A673 (cell line): ENCODE measurements at regions of chr11 and their contacts with region 1.

Region 1: GRCh38 chr11:47176328-47177228 is at the start of gene ARFGAP2:
- DNase-seq: peak; percentile 100
- H3K4me3 ChIP-seq: peak within 1 kb of the TSS; percentile 72
- H3K27ac ChIP-seq: peak within 1 kb of the TSS; percentile 93
- H3K4me1 ChIP-seq: peaks cover 16% of the 10 kb centered on the region
- H3K27me3 ChIP-seq: no peaks in the 10 kb centered on the region
- CTCF ChIP-seq: no peak
- total RNA-seq, gene ARFGAP2: 179 and 206 TPM in 2 replicates

Region 2: DNA sequence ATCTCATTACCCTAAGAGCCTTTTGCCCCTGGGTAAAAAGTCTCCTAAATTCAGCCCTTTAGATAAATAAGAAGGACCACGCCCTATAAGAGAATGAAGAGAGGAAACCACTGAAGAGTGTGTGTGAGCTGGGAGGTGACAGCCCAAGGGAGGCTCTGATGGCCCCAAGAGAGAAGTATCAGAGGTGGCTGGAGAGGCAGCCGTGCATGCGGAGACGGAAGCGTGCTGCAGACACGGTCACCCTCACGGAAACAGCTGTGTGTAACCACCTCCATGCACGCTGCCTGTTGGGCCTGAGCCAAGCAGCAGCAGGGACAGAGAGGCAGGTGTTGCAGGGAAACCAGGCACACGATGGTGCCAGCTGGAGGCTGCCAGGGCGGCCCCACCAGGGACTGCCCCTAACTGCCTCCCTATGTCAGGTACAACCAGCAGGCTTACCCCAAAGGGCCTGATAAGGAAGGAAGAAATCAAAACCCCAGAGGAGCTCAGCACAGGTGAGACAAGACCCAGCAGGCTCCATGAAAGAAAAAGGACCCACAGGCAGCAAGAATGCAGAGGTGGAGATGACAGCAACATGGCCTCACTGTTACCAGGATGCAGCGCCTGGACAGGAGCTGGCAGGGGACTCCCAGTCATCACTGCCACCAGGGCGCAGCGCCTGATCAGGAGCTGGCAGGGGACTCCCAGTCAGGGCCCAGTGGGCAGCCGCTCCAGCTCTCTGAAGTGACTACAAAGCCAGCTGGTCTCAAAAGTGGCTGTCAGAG is 1246.4 kb before region 1 on chr11:
- CTCF ChIA-PET with region 1: no interaction called
- POLR2A ChIA-PET with region 1: no interaction called
- intact Hi-C with region 1: no loop called
- DNase-seq: no peak
- H3K4me3 ChIP-seq: no peak overlapping the region
- H3K27ac ChIP-seq: no peak overlapping the region
- H3K4me1 ChIP-seq: no peaks in the 10 kb centered on the region
- H3K27me3 ChIP-seq: no peaks in the 10 kb centered on the region
- CTCF ChIP-seq: 0 out of 2 replicates have a peak, but pooled peaks have one; percentile 10

Region 3: GRCh38 chr11:46889689-46890475 is 286.7 kb before region 1 on chr11:
- CTCF ChIA-PET with region 1: no interaction called
- POLR2A ChIA-PET with region 1: no interaction called
- intact Hi-C with region 1: loop called (anchors 1 kb)
- DNase-seq: peak; percentile 92
- H3K4me3 ChIP-seq: no peak overlapping the region
- H3K27ac ChIP-seq: no peak overlapping the region
- H3K4me1 ChIP-seq: no peaks in the 10 kb centered on the region
- H3K27me3 ChIP-seq: no peaks in the 10 kb centered on the region
- CTCF ChIP-seq: peak; percentile 100

Region 4: GRCh38 chr11:47248664-47249377 is 72.2 kb after region 1 on chr11 and contains the start of gene ACP2:
- CTCF ChIA-PET with region 1: no interaction called
- POLR2A ChIA-PET with region 1: no interaction called
- intact Hi-C with region 1: loop called (anchors 5 kb)
- DNase-seq: peak; percentile 99
- H3K4me3 ChIP-seq: peak within 1 kb of the TSS; percentile 69
- H3K27ac ChIP-seq: peak within 1 kb of the TSS; percentile 96
- H3K4me1 ChIP-seq: peaks cover 13% of the 10 kb centered on the region
- H3K27me3 ChIP-seq: no peaks in the 10 kb centered on the region
- CTCF ChIP-seq: peak; percentile 68
- total RNA-seq, gene ACP2: 63.3 and 68.1 TPM in 2 replicates

Region 5: DNA sequence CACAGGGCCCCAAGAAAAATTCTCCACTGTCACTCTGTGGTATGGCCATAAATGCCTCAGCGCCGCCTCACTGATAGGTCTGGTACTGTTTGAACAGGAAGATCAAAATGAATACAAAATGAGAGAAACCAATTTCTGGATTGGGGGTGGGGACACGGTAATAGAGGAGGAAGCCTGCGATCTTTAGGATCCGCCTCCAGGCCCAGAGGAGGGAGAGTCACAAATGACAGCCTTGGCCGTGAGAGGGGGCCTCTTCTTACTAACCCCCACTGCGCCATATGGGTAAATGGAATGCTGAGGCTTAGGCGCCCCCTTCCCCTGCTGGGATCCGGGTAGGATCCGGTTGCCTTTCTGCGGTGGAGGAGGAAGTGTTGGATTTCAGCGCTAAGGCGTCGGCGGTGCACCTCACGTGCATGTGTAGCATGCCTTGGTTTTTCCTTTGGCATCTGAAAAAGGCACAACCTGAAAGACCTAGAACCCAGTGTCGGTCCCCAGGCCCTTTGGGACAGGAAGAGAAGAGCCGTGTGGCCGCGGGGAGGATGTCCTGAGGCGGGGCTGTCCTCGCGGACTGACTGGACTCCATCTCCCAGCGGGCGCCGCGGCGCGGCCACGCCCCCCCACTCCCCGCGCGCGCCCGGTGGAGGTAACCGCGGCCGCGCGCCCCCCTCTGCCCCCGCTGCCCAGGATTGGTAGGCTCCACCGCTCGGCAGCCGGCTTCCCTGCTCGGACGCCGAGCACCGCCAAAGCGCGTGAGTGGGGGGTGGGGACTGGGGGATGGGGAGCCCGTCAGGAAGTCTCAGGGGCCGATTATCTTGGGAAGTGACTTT is 92.6 kb after region 1 on chr11:
- CTCF ChIA-PET with region 1: interaction called, 3 read pairs
- POLR2A ChIA-PET with region 1: no interaction called
- intact Hi-C with region 1: loop called (anchors 2 kb)
- DNase-seq: peak; percentile 99
- H3K4me3 ChIP-seq: peak overlapping the region; percentile 65
- H3K27ac ChIP-seq: peak overlapping the region; percentile 95
- H3K4me1 ChIP-seq: peaks cover 42% of the 10 kb centered on the region
- H3K27me3 ChIP-seq: no peaks in the 10 kb centered on the region
- CTCF ChIP-seq: peak; percentile 54

Region 6: DNA sequence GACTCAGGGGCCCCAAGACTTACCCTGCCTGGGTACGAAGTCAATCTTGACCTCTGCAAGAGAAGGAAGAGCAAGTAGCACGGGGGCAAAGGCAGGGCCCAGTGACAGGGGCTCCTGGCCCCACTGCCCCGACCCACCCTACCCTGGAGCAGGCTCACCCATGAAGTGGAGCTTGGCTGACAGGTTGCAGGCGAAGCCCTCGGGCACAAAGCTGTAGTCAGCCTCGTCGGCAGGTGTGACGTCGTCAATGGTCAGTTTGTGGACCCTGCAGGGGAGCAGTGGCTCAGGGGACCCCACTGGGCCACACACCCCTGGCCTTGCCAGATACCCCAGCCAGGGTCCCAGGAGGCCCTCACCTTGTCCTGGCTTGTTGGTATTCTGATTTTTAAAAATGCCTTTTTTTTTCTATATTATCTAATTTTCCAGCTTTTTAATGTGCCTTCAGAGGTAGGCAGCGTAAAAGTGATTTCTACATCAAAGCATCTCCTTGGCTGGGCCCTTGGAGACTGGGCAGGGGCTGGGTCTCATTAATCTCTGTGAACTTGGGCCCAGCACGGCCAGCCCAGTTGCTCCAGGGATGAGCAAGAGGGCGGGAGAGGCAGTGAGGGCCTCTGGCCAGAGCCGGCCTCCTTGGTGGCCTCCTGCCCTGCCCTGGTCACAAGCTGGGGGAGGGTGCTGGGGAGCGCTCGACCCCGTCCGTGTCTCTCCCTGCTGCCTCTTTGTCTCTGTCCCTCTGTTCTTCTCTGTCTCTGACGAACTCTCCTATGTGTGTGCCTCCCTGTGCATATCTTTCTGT is 164.6 kb after region 1 on chr11:
- CTCF ChIA-PET with region 1: no interaction called
- POLR2A ChIA-PET with region 1: no interaction called
- intact Hi-C with region 1: no loop called
- DNase-seq: no peak
- H3K4me3 ChIP-seq: no peak overlapping the region
- H3K27ac ChIP-seq: no peak overlapping the region
- H3K4me1 ChIP-seq: no peaks in the 10 kb centered on the region
- H3K27me3 ChIP-seq: no peaks in the 10 kb centered on the region
- CTCF ChIP-seq: no peak

Region 7: DNA sequence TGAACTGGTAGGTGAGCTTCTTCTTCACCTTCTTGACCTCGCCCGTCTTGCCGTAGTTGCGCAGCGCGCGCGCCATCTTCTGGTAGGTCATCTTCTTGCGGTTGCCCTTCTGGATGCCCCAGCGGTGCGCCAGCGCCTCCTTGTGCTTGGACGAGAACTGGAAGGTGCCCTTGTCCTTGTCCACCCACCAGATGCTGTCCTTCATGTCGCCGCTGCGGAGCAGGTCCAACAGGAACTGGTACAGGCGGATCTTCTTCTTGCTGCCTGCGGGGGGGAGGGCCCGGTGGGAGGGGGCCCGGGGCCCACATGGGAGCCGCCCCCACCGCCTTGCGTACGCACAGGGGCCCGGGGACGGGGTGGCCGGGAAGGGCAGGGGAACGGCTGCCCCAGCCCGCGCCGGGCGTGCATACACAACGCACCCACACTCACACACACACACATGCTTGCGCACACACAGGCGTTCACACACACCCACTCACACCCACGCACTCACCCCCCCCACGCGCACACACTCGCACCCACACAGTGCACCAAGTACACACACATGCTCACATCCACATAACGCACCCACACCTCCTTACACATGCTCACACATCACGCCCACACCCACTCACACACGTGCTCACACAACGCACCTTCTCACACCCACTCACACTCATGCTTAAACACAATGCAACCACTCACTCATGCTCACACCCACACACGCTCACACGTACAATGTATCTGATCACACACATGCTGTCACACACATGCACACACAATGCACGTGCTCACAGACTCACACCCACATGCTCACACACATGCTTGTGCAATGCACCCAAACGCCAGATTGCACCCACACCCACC is 178.9 kb after region 1 on chr11:
- CTCF ChIA-PET with region 1: interaction called, 9 read pairs
- POLR2A ChIA-PET with region 1: no interaction called
- intact Hi-C with region 1: loop called (anchors 1 kb)
- DNase-seq: peak; percentile 99
- H3K4me3 ChIP-seq: peak overlapping the region; percentile 50
- H3K27ac ChIP-seq: peak overlapping the region; percentile 18
- H3K4me1 ChIP-seq: peaks cover 5% of the 10 kb centered on the region
- H3K27me3 ChIP-seq: no peaks in the 10 kb centered on the region
- CTCF ChIP-seq: peak; percentile 100

Region 8: DNA sequence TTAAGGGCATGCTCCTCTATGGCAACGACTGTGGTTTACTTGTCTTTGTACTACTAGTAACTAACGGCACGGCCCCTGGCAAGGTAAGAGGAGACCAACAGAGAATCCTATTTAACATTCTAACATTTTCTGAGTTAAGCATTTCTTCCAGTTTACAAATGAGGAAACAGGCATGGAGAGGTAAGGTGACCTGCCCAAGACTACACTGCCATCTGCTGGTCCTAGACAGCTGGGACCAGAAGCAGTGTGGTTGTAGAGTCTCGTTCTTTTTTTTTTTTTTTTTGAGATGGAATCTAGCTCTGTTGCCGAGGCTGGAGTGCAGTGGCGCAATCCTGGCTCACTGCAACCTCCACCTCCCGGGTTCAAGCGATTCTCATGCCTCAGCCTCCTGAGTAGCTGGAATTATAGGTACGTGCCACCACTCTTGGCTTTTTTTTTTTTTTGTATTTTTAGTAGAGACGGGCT is 277.6 kb after region 1 on chr11:
- CTCF ChIA-PET with region 1: no interaction called
- POLR2A ChIA-PET with region 1: interaction called, 4 read pairs
- intact Hi-C with region 1: loop called (anchors 5 kb)
- DNase-seq: peak; percentile 96
- H3K4me3 ChIP-seq: no peak overlapping the region
- H3K27ac ChIP-seq: no peak overlapping the region
- H3K4me1 ChIP-seq: no peaks in the 10 kb centered on the region
- H3K27me3 ChIP-seq: no peaks in the 10 kb centered on the region
- CTCF ChIP-seq: peak; percentile 99

Region 9: GRCh38 chr11:47847892-47848635 is 671.5 kb after region 1 on chr11 and contains the start of gene NUP160:
- CTCF ChIA-PET with region 1: no interaction called
- POLR2A ChIA-PET with region 1: no interaction called
- intact Hi-C with region 1: loop called (anchors 5 kb)
- DNase-seq: peak; percentile 93
- H3K4me3 ChIP-seq: peak within 1 kb of the TSS; percentile 62
- H3K27ac ChIP-seq: peak within 1 kb of the TSS; percentile 93
- H3K4me1 ChIP-seq: peaks cover 13% of the 10 kb centered on the region
- H3K27me3 ChIP-seq: no peaks in the 10 kb centered on the region
- CTCF ChIP-seq: 0 out of 2 replicates have a peak, but pooled peaks have one; percentile 27
- total RNA-seq, gene NUP160: 162 and 172 TPM in 2 replicates

Region 10: DNA sequence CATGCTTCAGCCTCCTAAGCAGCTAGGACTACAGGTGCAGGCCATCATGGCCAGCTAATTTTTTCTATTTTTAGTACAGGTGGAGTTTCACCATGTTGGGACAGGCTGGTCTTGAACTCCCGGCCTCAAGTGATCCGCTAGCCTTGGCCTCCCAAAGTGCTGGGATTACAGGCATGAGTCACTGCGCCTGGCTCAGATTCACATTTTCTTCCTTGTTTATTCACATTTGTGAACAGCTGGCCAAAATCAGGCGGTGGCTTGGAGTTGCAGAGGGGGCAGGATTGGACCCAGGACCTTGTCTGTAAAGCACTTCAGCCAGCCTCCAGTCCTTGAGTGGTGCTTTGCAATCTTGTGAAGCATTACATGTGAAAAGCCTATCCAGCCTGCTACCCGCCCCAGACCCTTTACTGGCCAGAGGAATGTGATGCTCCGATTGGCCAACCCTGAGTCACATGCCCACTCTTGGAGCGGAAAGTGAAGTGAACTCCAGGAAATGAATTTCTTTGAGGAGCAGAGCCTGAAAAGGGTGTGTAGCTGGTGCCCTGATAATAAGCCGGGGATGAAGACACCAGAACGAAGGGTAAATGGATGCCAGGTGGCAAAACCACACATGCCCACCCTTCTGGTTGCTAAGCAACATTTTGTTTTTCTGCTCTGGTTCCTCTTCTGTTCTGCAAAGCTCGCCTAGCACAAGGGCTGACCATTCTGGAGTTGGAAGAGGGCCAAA is 741.2 kb after region 1 on chr11:
- CTCF ChIA-PET with region 1: no interaction called
- POLR2A ChIA-PET with region 1: no interaction called
- intact Hi-C with region 1: no loop called
- DNase-seq: peak; percentile 50
- H3K4me3 ChIP-seq: no peak overlapping the region
- H3K27ac ChIP-seq: no peak overlapping the region
- H3K4me1 ChIP-seq: peaks cover 26% of the 10 kb centered on the region
- H3K27me3 ChIP-seq: no peaks in the 10 kb centered on the region
- CTCF ChIP-seq: no peak